CD4-positive, alpha-beta memory T cell (primary cell): ENCODE measurements at regions of chr11 and their contacts with region 1.

Region 1: GRCh38 chr11:67303132-67303834 is at the start of gene SSH3:
- DNase-seq: peak in 3 of 5 donors; percentile 19 to 42 (median 28)
- H3K4me3 ChIP-seq: peak within 1 kb of the TSS in 1 of 2 donors; percentile 66
- H3K4me3 Mint-ChIP-seq: peak within 1 kb of the TSS; percentile 48 to 80 (median 70)
- H3K27ac ChIP-seq: peak within 1 kb of the TSS; percentile 68
- H3K27ac Mint-ChIP-seq: peak within 1 kb of the TSS in 6 of 7 donors; percentile 47 to 72 (median 64)
- H3K4me1 ChIP-seq: peaks cover 20% of the 10 kb centered on the region
- H3K4me1 Mint-ChIP-seq: peaks cover 7 to 31% (median 14%) of the 10 kb centered on the region in 4 donors
- H3K27me3 ChIP-seq: no peaks in the 10 kb centered on the region
- H3K27me3 Mint-ChIP-seq: no peaks in the 10 kb centered on the region
- total RNA-seq, gene SSH3: 22.5 to 26.3 TPM

Region 2: DNA sequence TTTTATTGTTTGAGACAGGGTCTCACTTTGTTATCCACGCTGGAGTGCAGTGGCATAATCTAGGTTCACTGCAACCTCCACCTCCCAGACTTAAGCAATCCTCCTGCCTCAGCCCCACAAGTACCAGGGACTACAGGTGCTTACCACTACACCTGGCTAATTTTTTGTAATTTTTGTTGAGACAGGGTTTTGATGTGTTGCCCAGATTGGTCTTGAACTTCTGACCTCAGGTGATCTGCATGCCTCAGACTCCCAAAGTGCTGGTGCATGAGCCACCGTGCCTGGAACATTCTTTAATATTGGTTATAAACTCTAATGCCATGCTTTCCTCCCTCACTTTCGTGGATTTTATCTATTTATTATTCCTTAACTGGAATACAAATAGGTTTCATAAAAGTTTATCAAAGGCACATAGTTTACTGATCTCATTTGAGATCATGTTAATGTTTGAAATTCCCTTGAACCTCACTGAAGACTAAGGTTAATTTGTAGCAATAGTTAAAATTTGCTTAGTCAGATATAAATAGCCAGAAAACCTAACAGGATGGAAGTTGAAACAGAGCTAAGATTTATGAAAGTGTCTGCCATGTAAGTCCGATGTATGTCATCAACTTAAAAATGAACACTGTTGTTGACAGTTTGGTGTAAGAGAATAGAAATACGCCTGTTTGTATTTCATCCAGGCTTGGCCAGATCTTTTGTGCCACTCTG is 156.6 kb before region 1 on chr11:
- CTCF ChIA-PET with region 1: no interaction called
- POLR2A ChIA-PET with region 1: no interaction called
- intact Hi-C with region 1: no loop called
- DNase-seq: no peak
- H3K4me3 ChIP-seq: no peak overlapping the region
- H3K4me3 Mint-ChIP-seq: no peak overlapping the region
- H3K27ac ChIP-seq: no peak overlapping the region
- H3K27ac Mint-ChIP-seq: peak overlapping the region in 3 of 7 donors; percentile 34 to 59 (median 36)
- H3K4me1 ChIP-seq: no peaks in the 10 kb centered on the region
- H3K4me1 Mint-ChIP-seq: peaks cover 6 to 19% (median 10%) of the 10 kb centered on the region in 4 donors
- H3K27me3 ChIP-seq: no peaks in the 10 kb centered on the region
- H3K27me3 Mint-ChIP-seq: no peaks in the 10 kb centered on the region

Region 3: DNA sequence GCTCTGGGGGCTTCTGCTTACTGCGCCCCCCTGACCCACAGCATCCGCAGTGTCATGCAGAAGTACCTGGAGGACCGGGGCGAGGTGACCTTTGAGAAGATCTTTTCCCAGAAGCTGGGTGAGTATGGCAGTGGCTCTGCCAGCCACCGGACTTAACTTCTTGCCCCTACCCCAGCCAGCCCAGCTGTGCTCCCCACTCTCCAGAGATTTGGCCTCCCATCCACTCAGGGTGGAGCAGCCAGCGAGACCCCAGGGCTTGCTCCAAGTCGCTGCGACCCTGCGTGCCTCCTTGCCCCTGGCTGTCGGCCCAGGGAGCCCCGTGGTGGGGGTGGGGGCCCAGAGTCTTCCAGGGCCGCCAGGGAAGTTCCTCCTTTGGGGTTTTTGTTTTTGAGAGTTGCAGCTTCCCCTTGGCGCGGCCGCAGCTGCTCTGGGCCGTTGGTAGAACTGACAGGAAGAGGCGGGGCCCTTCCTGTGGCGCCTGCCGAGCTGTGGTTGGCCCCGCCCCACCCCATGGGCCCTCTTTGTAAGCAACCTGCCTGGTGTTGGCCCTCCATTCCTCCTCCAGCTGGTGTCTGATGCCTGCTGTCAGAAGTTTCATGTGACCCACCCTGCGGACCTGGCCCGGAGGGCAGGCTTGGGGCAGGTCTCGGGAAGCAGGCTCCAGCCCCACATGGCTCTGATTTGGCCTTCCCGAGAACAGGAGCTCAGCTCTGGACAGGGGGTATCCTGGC is 25.9 kb before region 1 on chr11:
- CTCF ChIA-PET with region 1: interaction called, 9 read pairs
- POLR2A ChIA-PET with region 1: interaction called, 88 read pairs
- intact Hi-C with region 1: no loop called
- DNase-seq: peak; percentile 92 to 96 (median 93)
- H3K4me3 ChIP-seq: peak overlapping the region; percentile 63 to 71
- H3K4me3 Mint-ChIP-seq: peak overlapping the region; percentile 79 to 92 (median 83)
- H3K27ac ChIP-seq: peak overlapping the region; percentile 95
- H3K27ac Mint-ChIP-seq: peak overlapping the region; percentile 94 to 99 (median 97)
- H3K4me1 ChIP-seq: peaks cover 98% of the 10 kb centered on the region
- H3K4me1 Mint-ChIP-seq: peaks cover 25 to 90% (median 54%) of the 10 kb centered on the region in 4 donors
- H3K27me3 ChIP-seq: no peaks in the 10 kb centered on the region
- H3K27me3 Mint-ChIP-seq: no peaks in the 10 kb centered on the region

Region 4: DNA sequence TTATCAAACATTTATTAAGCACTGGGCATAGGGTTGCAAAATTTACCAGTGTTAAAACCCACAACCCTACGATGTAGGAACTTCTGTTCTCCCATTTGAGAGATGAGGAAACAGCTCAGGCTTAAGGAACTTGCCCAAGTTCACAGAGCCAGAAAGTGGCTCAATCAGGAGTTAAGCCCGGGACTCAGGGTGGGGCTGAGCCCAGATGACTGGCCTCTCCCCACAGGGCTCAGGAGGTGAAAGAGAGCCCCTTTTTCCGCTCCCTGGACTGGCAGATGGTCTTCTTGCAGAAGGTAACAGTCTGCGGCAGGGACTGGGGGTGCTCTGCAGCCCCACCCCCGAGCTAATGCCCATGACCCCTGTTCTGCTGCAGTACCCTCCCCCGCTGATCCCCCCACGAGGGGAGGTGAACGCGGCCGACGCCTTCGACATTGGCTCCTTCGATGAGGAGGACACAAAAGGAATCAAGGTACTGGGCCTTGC is 19.8 kb before region 1 on chr11:
- CTCF ChIA-PET with region 1: interaction called, 9 read pairs
- POLR2A ChIA-PET with region 1: interaction called, 196 read pairs
- intact Hi-C with region 1: loop called (anchors 2 kb)
- DNase-seq: peak in 1 of 5 donors; percentile 33
- H3K4me3 ChIP-seq: no peak overlapping the region
- H3K4me3 Mint-ChIP-seq: no peak overlapping the region
- H3K27ac ChIP-seq: peak overlapping the region; percentile 16
- H3K27ac Mint-ChIP-seq: peak overlapping the region in 6 of 7 donors; percentile 47 to 87 (median 64)
- H3K4me1 ChIP-seq: peaks cover 86% of the 10 kb centered on the region
- H3K4me1 Mint-ChIP-seq: peaks cover 23 to 83% (median 39%) of the 10 kb centered on the region in 4 donors
- H3K27me3 ChIP-seq: no peaks in the 10 kb centered on the region
- H3K27me3 Mint-ChIP-seq: no peaks in the 10 kb centered on the region

Region 5: GRCh38 chr11:67288452-67289225 is 14.6 kb before region 1 on chr11:
- CTCF ChIA-PET with region 1: interaction called, 9 read pairs
- POLR2A ChIA-PET with region 1: interaction called, 196 read pairs
- intact Hi-C with region 1: loop called (anchors 2 kb)
- DNase-seq: peak; percentile 89 to 94 (median 91)
- H3K4me3 ChIP-seq: peak overlapping the region; percentile 58 to 62
- H3K4me3 Mint-ChIP-seq: peak overlapping the region; percentile 79 to 90 (median 86)
- H3K27ac ChIP-seq: peak overlapping the region; percentile 88
- H3K27ac Mint-ChIP-seq: peak overlapping the region; percentile 95 to 100 (median 98)
- H3K4me1 ChIP-seq: peaks cover 77% of the 10 kb centered on the region
- H3K4me1 Mint-ChIP-seq: peaks cover 32 to 81% (median 46%) of the 10 kb centered on the region in 4 donors
- H3K27me3 ChIP-seq: no peaks in the 10 kb centered on the region
- H3K27me3 Mint-ChIP-seq: no peaks in the 10 kb centered on the region

Region 6: GRCh38 chr11:67332081-67332691 is 28.9 kb after region 1 on chr11:
- CTCF ChIA-PET with region 1: no interaction called
- POLR2A ChIA-PET with region 1: no interaction called
- intact Hi-C with region 1: no loop called
- DNase-seq: no peak
- H3K4me3 ChIP-seq: no peak overlapping the region
- H3K4me3 Mint-ChIP-seq: no peak overlapping the region
- H3K27ac ChIP-seq: no peak overlapping the region
- H3K27ac Mint-ChIP-seq: no peak overlapping the region
- H3K4me1 ChIP-seq: no peaks in the 10 kb centered on the region
- H3K4me1 Mint-ChIP-seq: no peaks in the 10 kb centered on the region
- H3K27me3 ChIP-seq: no peaks in the 10 kb centered on the region
- H3K27me3 Mint-ChIP-seq: no peaks in the 10 kb centered on the region